IMR-90 (cell line): ENCODE measurements at regions of chr3 and their contacts with region 1.

Region 1: DNA sequence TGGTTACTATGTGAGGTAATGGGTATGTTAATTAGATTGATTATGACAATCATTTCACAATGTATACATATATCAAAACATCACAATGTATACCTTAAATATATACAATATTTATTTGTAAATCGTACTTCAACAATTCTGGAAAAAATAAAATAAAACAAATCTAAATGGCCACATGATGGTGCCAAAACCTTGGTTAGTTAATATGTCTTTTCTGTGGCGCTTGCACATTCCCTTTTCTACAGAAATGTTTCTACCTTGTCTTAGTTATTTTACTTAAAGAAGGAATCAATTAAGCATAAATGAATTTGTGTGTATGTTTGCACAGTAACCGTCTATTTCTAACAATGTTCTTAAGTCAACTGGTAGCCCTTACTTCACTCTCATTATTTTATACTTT is 53.4 kb downstream of the OXSM start:
- DNase-seq: peak; percentile 25
- ATAC-seq: no peak
- H3K4me3 ChIP-seq: no peak overlapping the region
- H3K27ac ChIP-seq: no peak overlapping the region
- H3K4me1 ChIP-seq: no peaks in the 10 kb centered on the region
- H3K27me3 ChIP-seq: no peaks in the 10 kb centered on the region
- CTCF ChIP-seq: peak; percentile 47
- POLR2A ChIP-seq: no peak
- RAD21 ChIP-seq: peak; percentile 61

Region 2: GRCh38 chr3:25195261-25195660 is 648.1 kb before region 1 on chr3:
- CTCF ChIA-PET with region 1: no interaction called
- POLR2A ChIA-PET with region 1: no interaction called
- dilution Hi-C with region 1: no loop called
- in situ Hi-C with region 1: no loop called
- intact Hi-C with region 1: no loop called
- DNase-seq: no peak
- ATAC-seq: no peak
- H3K4me3 ChIP-seq: no peak overlapping the region
- H3K27ac ChIP-seq: no peak overlapping the region
- H3K4me1 ChIP-seq: no peaks in the 10 kb centered on the region
- H3K27me3 ChIP-seq: no peaks in the 10 kb centered on the region
- CTCF ChIP-seq: no peak
- POLR2A ChIP-seq: no peak
- RAD21 ChIP-seq: no peak

Region 3: DNA sequence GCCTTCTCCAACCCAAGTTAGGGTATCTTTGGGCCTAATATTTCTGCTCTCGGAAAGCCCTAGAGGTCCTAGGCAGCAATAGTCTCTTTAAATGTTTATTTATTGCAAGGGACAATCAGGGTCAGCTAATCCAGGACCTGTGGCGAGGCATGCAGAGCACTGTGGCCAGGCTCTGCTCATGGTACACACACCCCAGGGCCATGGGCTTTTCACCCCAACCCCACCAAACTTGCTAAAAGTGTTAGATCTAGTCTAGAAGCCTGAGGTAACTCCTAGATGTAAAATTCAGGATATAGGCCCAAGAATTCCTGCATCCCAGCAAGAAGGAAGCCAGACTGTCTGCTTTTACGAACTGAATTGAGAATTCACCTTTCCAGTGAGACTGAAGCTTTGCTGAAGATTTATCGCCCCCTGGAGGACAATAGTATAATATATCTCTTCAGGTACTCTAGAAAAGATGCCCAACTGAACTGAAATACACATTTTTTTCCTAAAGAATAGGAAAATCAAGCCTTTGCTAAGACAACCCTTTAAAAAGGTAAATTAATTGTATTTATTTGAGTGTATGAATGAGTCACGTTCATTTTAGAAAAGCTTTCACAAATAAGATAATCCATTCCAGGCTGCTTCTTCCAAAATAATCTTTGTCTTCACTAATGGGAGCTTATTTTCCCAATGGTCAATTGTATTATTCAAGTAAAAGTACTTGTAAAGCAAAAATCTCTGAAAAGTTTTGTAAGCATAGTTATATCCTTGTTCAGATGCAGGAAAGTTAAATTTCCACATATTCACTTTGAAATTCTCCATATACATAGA is 869.1 kb after region 1 on chr3:
- CTCF ChIA-PET with region 1: no interaction called
- POLR2A ChIA-PET with region 1: no interaction called
- dilution Hi-C with region 1: no loop called
- in situ Hi-C with region 1: no loop called
- intact Hi-C with region 1: loop called (anchors 1 kb)
- DNase-seq: peak; percentile 1
- ATAC-seq: no peak
- H3K4me3 ChIP-seq: no peak overlapping the region
- H3K27ac ChIP-seq: no peak overlapping the region
- H3K4me1 ChIP-seq: no peaks in the 10 kb centered on the region
- H3K27me3 ChIP-seq: no peaks in the 10 kb centered on the region
- CTCF ChIP-seq: peak; percentile 29; the same call in 1 of the 2 replicates
- POLR2A ChIP-seq: no peak
- RAD21 ChIP-seq: peak; percentile 33; the same call in 1 of the 2 replicates

Region 4: DNA sequence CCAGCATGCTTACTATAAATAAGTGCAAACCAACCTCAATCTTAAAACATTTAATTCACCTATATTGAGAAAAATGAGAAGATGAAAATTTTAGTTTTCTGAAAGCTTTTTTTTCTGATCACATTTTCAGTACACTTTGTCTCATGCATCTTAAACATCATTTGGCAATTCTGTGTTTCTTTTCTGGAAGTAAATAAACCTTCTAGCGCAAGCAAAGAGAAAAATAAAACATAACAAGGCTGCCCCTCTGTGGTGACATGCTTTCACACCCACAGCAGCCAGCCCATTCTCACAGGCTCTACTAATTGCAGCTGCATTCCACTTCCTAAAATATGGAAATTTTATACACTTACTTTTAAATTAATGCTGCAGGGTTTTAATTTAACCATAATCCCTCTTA is 1435.8 kb after region 1 on chr3:
- CTCF ChIA-PET with region 1: no interaction called
- POLR2A ChIA-PET with region 1: no interaction called
- dilution Hi-C with region 1: no loop called
- in situ Hi-C with region 1: no loop called
- intact Hi-C with region 1: loop called (anchors 10 kb)
- DNase-seq: no peak
- ATAC-seq: 0 out of 2 replicates have a peak, but pooled peaks have one; percentile 37
- H3K4me3 ChIP-seq: no peak overlapping the region
- H3K27ac ChIP-seq: no peak overlapping the region
- H3K4me1 ChIP-seq: no peaks in the 10 kb centered on the region
- H3K27me3 ChIP-seq: no peaks in the 10 kb centered on the region
- CTCF ChIP-seq: peak; percentile 38
- POLR2A ChIP-seq: no peak
- RAD21 ChIP-seq: peak; percentile 28; the same call in 1 of the 2 replicates